CD8-positive, alpha-beta T cell (primary cell): ENCODE measurements at regions of chr16 and their contacts with region 1.

Region 1: GRCh38 chr16:58638148-58639036 is 8.8 kb upstream of the CNOT1 start:
- DNase-seq: peak in 1 of 9 experiments; percentile 26
- ATAC-seq: no peak
- H3K4me3 ChIP-seq: no peak overlapping the region
- H3K4me3 Mint-ChIP-seq: no peak overlapping the region
- H3K27ac ChIP-seq: no peak overlapping the region
- H3K27ac Mint-ChIP-seq: no peak overlapping the region
- H3K4me1 ChIP-seq: no peaks in the 10 kb centered on the region
- H3K4me1 Mint-ChIP-seq: no peaks in the 10 kb centered on the region
- H3K27me3 ChIP-seq: no peaks in the 10 kb centered on the region
- H3K27me3 Mint-ChIP-seq: peaks cover 2% of the 10 kb centered on the region
- CTCF ChIP-seq: no peak

Region 2: GRCh38 chr16:58515125-58515870 is 123.1 kb before region 1 on chr16 and contains the start of gene SETD6:
- CTCF ChIA-PET with region 1: interaction called, 3 read pairs
- POLR2A ChIA-PET with region 1: no interaction called
- intact Hi-C with region 1: loop called in 1 of 2 experiments (anchors 1 kb)
- DNase-seq: peak; percentile 25 to 81 (median 68)
- ATAC-seq: peak; percentile 59
- H3K4me3 ChIP-seq: peak within 1 kb of the TSS; percentile 72 to 92
- H3K4me3 Mint-ChIP-seq: peak within 1 kb of the TSS; percentile 90
- H3K27ac ChIP-seq: peak within 1 kb of the TSS; percentile 64 to 73
- H3K27ac Mint-ChIP-seq: peak within 1 kb of the TSS; percentile 80
- H3K4me1 ChIP-seq: peaks cover 13% of the 10 kb centered on the region
- H3K4me1 Mint-ChIP-seq: peaks cover 20% of the 10 kb centered on the region
- H3K27me3 ChIP-seq: no peaks in the 10 kb centered on the region
- H3K27me3 Mint-ChIP-seq: no peaks in the 10 kb centered on the region
- CTCF ChIP-seq: no peak
- total RNA-seq, gene SETD6: 17.3 to 17.4 TPM